ENCODE measurements at regions of chr16 and their contacts with region 1.

Region 1: GRCh38 chr16:89193021-89193575 is 7.2 kb downstream of the SLC22A31 start:
- DNase-seq: no peak
- ATAC-seq: no peak
- H3K4me3 Mint-ChIP-seq: no peak overlapping the region
- H3K27ac Mint-ChIP-seq: no peak overlapping the region
- H3K4me1 Mint-ChIP-seq: peaks cover 3% of the 10 kb centered on the region
- H3K27me3 Mint-ChIP-seq: peaks cover 2% of the 10 kb centered on the region
- CTCF ChIP-seq: no peak

Region 2: DNA sequence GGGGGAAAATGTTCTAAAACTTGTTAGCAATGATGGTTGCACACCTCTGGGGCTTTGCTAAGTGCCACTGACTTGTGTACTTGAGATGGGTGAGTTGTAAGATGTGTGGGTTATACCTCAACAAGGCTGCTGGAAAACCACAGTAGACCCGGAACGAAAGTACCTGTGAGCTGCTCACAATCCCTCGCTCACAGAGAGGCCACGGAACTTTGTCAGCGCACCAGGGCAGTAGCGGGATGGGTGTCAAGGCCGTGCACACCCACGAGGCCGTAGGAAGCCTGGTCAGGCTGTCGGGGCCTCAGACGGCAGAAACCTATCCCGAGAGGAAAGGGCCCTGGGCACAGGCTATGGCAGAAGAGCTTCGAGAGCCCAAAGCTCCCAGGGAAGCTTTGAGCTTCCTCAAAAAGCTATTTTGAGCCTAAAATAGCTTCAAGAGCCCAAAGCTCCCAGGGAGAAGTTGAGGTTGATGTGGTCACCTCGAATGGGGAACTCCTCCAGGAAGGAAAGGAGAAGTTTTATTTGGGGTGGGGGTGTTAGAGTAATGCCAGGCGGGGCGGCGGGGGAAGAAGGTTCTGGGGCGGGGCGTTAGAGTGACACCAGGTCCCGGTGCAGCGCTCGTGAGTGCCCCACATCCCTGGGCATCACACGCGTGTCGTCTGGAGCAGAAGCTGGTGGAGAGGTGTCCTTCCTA is 235.1 kb before region 1 on chr16:
- CTCF ChIA-PET with region 1: no interaction called
- POLR2A ChIA-PET with region 1: interaction called, 24 read pairs
- intact Hi-C with region 1: no loop called
- DNase-seq: no peak
- ATAC-seq: peak; percentile 52
- H3K4me3 Mint-ChIP-seq: peak overlapping the region; percentile 56
- H3K27ac Mint-ChIP-seq: peak overlapping the region; percentile 70
- H3K4me1 Mint-ChIP-seq: peaks cover 36% of the 10 kb centered on the region
- H3K27me3 Mint-ChIP-seq: no peaks in the 10 kb centered on the region
- CTCF ChIP-seq: no peak

Region 3: DNA sequence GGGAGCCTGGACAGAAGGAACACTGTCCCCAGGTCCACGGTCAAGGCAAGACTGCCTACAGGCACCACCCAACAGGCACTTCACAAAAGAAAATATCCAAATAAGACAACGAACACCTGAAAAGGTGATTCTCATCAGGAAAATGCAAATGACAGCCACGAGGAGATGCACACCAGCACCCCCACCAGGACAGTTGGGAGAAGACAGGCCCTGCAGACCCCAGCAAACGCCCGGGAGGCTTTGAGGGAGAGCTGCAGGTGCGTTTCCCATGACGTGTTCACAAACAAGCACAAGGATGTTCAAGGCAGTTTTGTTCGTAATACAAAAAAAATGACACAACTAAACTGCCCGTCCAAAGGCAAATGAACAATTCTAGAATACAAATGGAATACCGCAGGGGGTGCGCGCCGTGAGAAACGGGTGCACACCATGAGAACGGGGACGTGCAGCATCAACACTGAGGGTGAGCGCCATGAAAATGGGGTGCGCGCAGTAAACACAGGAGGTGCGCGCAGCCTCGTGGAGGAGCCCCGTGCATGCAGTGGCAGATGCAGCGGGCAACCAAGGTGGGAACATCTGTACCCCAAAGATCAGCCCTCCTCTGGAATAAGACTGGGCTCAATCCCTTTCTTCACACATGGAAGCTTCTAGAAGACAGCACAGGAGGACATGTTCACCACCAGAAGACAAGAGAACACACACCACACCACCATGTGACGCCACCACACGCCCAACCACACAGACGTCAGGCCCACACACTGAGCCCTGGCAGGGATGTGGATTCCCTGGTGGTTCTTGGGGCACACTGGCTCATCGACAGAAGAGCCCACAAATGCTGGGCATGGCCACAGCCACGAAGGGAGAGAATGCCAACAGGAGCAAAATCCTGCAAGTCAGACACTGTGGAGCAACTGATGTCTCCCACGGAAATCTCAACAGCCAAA is 115.6 kb after region 1 on chr16:
- CTCF ChIA-PET with region 1: no interaction called
- POLR2A ChIA-PET with region 1: no interaction called
- intact Hi-C with region 1: no loop called
- DNase-seq: no peak
- ATAC-seq: peak; percentile 53
- H3K4me3 Mint-ChIP-seq: no peak overlapping the region
- H3K27ac Mint-ChIP-seq: no peak overlapping the region
- H3K4me1 Mint-ChIP-seq: peaks cover 43% of the 10 kb centered on the region
- H3K27me3 Mint-ChIP-seq: no peaks in the 10 kb centered on the region
- CTCF ChIP-seq: no peak

Region 4: DNA sequence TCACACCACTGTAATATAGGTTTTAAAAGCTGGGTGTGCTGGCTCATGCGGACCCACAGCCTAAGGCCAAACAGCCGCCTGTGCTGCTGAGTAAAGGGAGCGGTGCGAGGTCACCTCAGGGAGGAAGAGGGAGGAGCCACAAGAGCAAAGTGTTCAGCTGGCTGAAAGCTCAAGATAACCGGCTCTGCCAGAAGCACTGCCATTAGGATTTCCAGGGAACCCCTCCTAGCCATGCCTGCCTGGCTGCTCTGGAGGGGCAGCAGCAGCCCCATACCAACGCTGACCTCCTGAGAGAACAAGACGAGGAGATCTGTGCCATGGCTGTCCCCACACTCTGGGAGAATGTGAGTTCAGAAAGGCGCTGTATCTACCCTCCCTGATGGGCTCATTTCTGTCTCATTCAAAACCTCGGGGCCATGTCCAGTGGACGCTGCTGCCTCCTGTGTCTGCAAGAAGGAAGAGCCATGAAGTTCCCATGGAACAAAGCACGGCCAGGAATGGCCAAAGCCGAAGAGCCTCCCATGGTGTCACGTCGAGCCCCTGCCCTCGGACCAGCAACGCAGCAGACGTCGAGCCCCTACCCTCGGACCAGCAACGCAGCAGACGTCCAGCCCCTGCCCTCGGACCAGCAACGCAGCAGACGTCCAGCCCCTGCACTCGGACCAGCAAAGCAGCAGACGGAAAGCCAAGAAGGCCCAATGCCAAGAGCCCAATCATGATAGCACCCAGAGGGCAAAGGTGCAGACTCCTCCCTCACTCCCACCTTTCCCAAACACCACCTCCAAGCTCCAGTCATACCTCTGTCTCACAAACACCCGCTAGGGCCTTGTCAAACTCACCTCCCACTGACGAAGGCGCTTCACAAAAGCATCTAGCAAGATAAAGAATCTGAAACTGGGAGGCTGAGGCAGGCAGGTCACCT is 190.2 kb after region 1 on chr16:
- CTCF ChIA-PET with region 1: no interaction called
- POLR2A ChIA-PET with region 1: no interaction called
- intact Hi-C with region 1: no loop called
- DNase-seq: no peak
- ATAC-seq: peak; percentile 28
- H3K4me3 Mint-ChIP-seq: peak overlapping the region; percentile 48
- H3K27ac Mint-ChIP-seq: no peak overlapping the region
- H3K4me1 Mint-ChIP-seq: peaks cover 89% of the 10 kb centered on the region
- H3K27me3 Mint-ChIP-seq: no peaks in the 10 kb centered on the region
- CTCF ChIP-seq: no peak